K562 (cell line): ENCODE measurements at regions of chr1 and their contacts with region 1.

Region 1: GRCh38 chr1:155729031-155729898 is 40.4 kb downstream of the DAP3 start:
- DNase-seq: peak in 3 of 4 experiments; percentile 18 to 67 (median 39)
- ATAC-seq: peak; percentile 92
- H3K4me3 ChIP-seq: no peak overlapping the region
- H3K27ac ChIP-seq: no peak overlapping the region
- H3K4me1 ChIP-seq: no peaks in the 10 kb centered on the region
- H3K27me3 ChIP-seq: no peaks in the 10 kb centered on the region
- CTCF ChIP-seq: peak; percentile 64 to 75 (median 69)
- EP300 ChIP-seq: no peak
- POLR2A ChIP-seq: 0 out of 2 replicates have a peak, but pooled peaks have one; percentile 1
- RAD21 ChIP-seq: peak; percentile 51 to 72

Region 2: GRCh38 chr1:155648551-155649147 is 80.6 kb before region 1 on chr1:
- CTCF ChIA-PET with region 1: no interaction called
- POLR2A ChIA-PET with region 1: no interaction called
- in situ Hi-C with region 1: no loop called
- intact Hi-C with region 1: loop called (anchors 5 kb)
- DNase-seq: peak in 1 of 4 experiments; percentile 52
- ATAC-seq: peak; percentile 86
- H3K4me3 ChIP-seq: no peak overlapping the region
- H3K27ac ChIP-seq: no peak overlapping the region
- H3K4me1 ChIP-seq: no peaks in the 10 kb centered on the region; a peak in 2 of 5 replicates
- H3K27me3 ChIP-seq: peaks cover 0 to 2% of the 10 kb centered on the region in 2 experiments; a peak in 1 of 5 replicates
- CTCF ChIP-seq: peak; percentile 41 to 60 (median 43); a peak in 3 of 6 replicates
- EP300 ChIP-seq: no peak
- POLR2A ChIP-seq: no peak
- RAD21 ChIP-seq: peak; percentile 32 to 52; a peak in 3 of 4 replicates

Region 3: GRCh38 chr1:155678027-155678426 is 51.2 kb before region 1 on chr1:
- CTCF ChIA-PET with region 1: no interaction called
- POLR2A ChIA-PET with region 1: no interaction called
- in situ Hi-C with region 1: no loop called
- intact Hi-C with region 1: loop called (anchors 5 kb)
- DNase-seq: no peak
- ATAC-seq: no peak
- H3K4me3 ChIP-seq: no peak overlapping the region
- H3K27ac ChIP-seq: no peak overlapping the region
- H3K4me1 ChIP-seq: no peaks in the 10 kb centered on the region
- H3K27me3 ChIP-seq: no peaks in the 10 kb centered on the region
- CTCF ChIP-seq: no peak
- EP300 ChIP-seq: no peak
- POLR2A ChIP-seq: no peak
- RAD21 ChIP-seq: no peak

Region 4: DNA sequence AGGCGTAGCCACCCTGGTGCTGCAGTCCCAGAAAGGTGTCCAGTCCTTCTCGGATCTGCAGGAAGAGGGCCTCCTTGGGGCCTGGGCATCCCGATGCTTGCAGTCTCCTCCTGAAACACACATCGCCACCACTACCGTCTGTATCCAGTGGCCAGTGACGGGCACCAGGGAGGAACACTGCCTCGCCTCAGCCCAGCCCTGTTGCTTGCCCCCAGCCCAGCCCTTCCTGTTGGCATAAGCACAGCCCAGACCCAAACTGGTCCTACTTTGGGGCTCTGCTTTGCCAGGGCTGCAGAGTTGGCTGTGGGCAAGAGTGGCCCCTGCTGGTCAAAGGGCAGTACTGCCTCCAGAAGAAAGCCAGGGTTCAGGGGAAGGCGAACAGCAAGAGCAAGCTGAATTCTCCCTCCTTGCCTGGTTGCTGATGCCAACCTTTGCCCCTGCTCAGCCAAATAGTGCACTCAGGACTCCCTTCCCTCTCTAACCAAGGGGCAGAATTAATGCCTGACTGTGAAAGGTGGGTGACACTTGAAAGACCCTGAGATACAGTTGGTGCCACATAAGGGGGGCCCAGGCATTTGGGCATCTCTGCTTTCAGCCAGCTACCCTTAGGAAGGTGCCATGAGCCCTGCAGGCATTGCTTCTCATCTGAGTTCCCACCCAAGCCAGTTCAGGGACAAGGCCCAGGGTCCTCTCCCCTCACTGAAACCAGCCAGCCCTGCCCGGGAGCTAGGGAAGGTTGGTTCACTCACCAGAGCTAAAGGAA is 260.2 kb after region 1 on chr1:
- CTCF ChIA-PET with region 1: interaction called, 3 read pairs
- POLR2A ChIA-PET with region 1: no interaction called
- in situ Hi-C with region 1: no loop called
- intact Hi-C with region 1: loop called (anchors 5 kb)
- DNase-seq: peak; percentile 69 to 76 (median 72)
- ATAC-seq: peak; percentile 95
- H3K4me3 ChIP-seq: no peak overlapping the region
- H3K27ac ChIP-seq: no peak overlapping the region
- H3K4me1 ChIP-seq: peaks cover 2 to 7% of the 10 kb centered on the region in 2 experiments; a peak in 4 of 5 replicates
- H3K27me3 ChIP-seq: no peaks in the 10 kb centered on the region
- CTCF ChIP-seq: peak; percentile 92 to 97 (median 95)
- EP300 ChIP-seq: no peak
- POLR2A ChIP-seq: no peak
- RAD21 ChIP-seq: peak; percentile 94 to 96